Sigmoid colon (tissue), 7 donors: ENCODE measurements at regions of chr14 and their contacts with region 1.

Region 1: DNA sequence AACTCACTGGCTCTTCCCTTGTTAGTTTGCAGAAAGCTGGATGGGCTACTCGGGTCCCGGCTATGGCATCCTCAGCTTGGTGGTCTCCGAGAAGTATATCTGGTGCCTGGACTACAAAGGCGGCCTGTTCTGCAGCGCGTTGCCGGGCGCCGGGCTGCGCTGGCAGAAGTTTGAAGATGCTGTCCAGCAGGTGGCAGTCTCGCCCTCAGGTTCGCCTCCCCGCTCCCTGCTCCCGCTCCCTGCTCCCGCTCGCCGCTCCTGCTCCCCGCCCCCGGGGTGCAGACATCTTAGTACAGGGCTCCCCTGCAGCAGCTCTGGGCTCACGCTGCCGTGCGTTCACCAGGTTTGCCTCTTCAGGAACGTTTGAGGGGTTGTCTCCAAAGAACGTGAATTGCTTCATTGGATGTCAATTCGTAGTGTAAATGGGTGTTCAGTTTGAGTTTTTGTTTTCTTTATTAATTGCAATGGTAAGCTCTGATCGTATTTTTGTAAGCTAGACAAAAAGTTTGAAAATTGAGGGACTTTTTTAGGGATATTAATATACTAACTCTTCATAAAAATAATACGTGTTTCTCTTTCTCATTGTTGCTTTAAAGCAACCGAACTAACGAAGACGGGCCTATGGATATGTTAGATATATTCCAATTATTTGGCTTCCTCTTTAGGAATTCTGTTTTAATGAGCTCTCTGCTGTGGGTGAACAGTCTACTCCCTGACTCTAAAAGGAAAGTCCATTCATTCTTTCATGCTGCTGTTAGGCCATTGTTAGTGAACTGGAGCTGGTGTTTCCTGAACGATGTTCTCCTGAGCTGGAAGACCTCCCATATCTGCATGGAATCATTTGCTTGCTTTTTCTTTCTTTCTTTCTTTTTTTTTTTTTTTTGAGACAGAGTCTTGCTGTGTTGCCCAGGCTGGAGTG is 71.3 kb downstream of the ANKRD9 start:
- DNase-seq: peak; percentile 94
- H3K4me3 ChIP-seq: peak overlapping the region in 2 of 4 donors; percentile 23 to 27
- H3K27ac ChIP-seq: peak overlapping the region; percentile 2 to 54 (median 42)
- H3K4me1 ChIP-seq: peaks cover 0 to 16% (median 8%) of the 10 kb centered on the region in 4 donors
- H3K27me3 ChIP-seq: no peaks in the 10 kb centered on the region
- CTCF ChIP-seq: peak; percentile 55 to 87 (median 70)
- EP300 ChIP-seq: no peak
- POLR2A ChIP-seq: no peak

Region 2: GRCh38 chr14:102362545-102363181 is 75.6 kb before region 1 on chr14 and contains the starts of genes CINP and TECPR2:
- intact Hi-C with region 1: loop called (anchors 2 kb)
- DNase-seq: peak; percentile 99
- H3K4me3 ChIP-seq: peak within 1 kb of the TSS; percentile 68 to 93 (median 88)
- H3K27ac ChIP-seq: peak within 1 kb of the TSS; percentile 89 to 99 (median 96)
- H3K4me1 ChIP-seq: peaks cover 0 to 37% (median 25%) of the 10 kb centered on the region in 4 donors
- H3K27me3 ChIP-seq: no peaks in the 10 kb centered on the region
- CTCF ChIP-seq: no peak
- EP300 ChIP-seq: no peak
- POLR2A ChIP-seq: peak; percentile 18 to 46
- total RNA-seq, gene CINP: 12.5 to 24.6 (median 19.8) TPM
- total RNA-seq, gene TECPR2: 15.3 to 51.0 (median 17.2) TPM

Region 3: GRCh38 chr14:102516531-102517415 is 78.5 kb after region 1 on chr14:
- intact Hi-C with region 1: loop called (anchors 1 kb)
- DNase-seq: peak; percentile 78
- H3K4me3 ChIP-seq: peak overlapping the region; percentile 52 to 99 (median 78)
- H3K27ac ChIP-seq: peak overlapping the region; percentile 51 to 78 (median 74)
- H3K4me1 ChIP-seq: peaks cover 0 to 15% (median 7%) of the 10 kb centered on the region in 4 donors
- H3K27me3 ChIP-seq: no peaks in the 10 kb centered on the region
- CTCF ChIP-seq: peak in 3 of 4 experiments; percentile 25 to 96 (median 40)
- EP300 ChIP-seq: no peak
- POLR2A ChIP-seq: no peak

Region 4: GRCh38 chr14:102591889-102592763 is 153.9 kb after region 1 on chr14 and contains the start of gene RCOR1:
- intact Hi-C with region 1: loop called (anchors 10 kb)
- DNase-seq: peak; percentile 99
- H3K4me3 ChIP-seq: peak within 1 kb of the TSS; percentile 67 to 92 (median 86)
- H3K27ac ChIP-seq: peak within 1 kb of the TSS; percentile 88 to 99 (median 98)
- H3K4me1 ChIP-seq: peaks cover 0 to 32% (median 29%) of the 10 kb centered on the region in 4 donors
- H3K27me3 ChIP-seq: no peaks in the 10 kb centered on the region
- CTCF ChIP-seq: no peak
- EP300 ChIP-seq: no peak
- POLR2A ChIP-seq: peak; percentile 15 to 21
- total RNA-seq, gene RCOR1: 8.9 to 11.9 (median 11.8) TPM